ENCODE measurements at regions of chr12 and their contacts with region 1.

Region 1: GRCh38 chr12:21677622-21678277 is 20.1 kb upstream of the LDHB start:
- DNase-seq: no peak
- H3K4me3 ChIP-seq: no peak overlapping the region
- H3K27ac ChIP-seq: no peak overlapping the region
- H3K4me1 ChIP-seq: no peaks in the 10 kb centered on the region
- CTCF ChIP-seq: no peak

Region 2: GRCh38 chr12:21308785-21309184 is 369.0 kb before region 1 on chr12:
- CTCF ChIA-PET with region 1: no interaction called
- POLR2A ChIA-PET with region 1: no interaction called
- intact Hi-C with region 1: loop called (anchors 1 kb)
- DNase-seq: no peak
- H3K4me3 ChIP-seq: no peak overlapping the region
- H3K27ac ChIP-seq: no peak overlapping the region
- H3K4me1 ChIP-seq: no peaks in the 10 kb centered on the region
- CTCF ChIP-seq: no peak

Region 3: DNA sequence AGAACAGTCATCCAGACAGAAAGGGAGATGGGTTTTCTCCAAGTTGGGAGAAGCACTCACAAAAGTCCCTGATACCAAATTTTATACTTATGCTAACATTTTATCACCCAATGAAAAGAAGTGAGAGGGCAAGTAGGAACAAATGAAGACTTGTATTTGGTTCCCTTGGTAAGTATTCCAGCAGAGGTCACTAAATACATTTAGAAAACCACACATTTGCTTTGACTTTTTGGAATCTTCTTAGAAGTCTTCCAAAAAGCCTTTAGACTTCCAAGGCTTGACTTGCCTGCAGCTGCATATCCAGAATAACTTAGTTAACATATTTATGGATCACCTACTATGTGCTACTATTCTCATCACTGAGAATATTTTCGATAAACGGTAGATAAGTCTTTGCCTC is 70.0 kb before region 1 on chr12:
- CTCF ChIA-PET with region 1: no interaction called
- POLR2A ChIA-PET with region 1: no interaction called
- intact Hi-C with region 1: loop called (anchors 1 kb)
- DNase-seq: peak; percentile 14
- H3K4me3 ChIP-seq: no peak overlapping the region
- H3K27ac ChIP-seq: no peak overlapping the region
- H3K4me1 ChIP-seq: no peaks in the 10 kb centered on the region
- CTCF ChIP-seq: peak; percentile 66

Measured in OCI-LY7 (cell line).